ENCODE measurements at regions of chr6 and their contacts with region 1.

Region 1: DNA sequence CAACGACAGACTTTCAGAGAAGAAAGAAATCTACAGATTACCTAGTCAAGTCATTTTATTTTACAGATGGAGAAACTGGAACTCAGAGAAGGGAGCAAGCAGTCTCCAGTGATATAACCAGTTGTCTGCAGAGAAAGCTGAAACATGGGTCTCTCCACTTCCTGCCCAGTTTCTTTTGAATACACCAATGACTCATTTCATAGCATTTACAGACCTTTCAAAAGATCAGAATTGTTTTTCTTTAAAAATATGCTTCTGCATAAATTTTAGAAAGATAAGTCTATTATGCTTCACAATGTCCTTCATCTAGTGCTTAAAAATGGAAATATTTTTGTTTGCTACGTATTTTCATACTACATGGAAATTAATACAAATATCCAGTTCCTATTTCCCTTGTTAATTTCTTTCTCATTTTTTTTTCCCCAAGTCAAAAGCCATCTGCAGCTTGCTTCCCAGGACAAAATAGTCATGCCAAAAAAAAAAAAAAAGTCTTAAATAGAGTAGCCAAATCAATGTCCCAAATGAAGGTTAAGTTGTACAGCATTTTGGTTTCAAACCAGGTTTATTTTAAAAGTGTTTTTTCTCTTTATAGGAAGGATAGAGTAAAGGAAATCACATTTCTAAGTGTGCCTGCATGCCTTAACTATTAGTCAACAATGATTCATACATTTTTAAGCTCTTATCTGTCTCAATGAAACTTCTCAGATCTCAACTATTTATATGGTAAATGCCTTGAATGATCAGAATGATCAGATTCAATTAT is 36.9 kb downstream of the ARHGAP18 start:
- DNase-seq: no peak
- H3K4me3 Mint-ChIP-seq: peak overlapping the region; percentile 61
- H3K27ac Mint-ChIP-seq: peak overlapping the region; percentile 90
- H3K4me1 Mint-ChIP-seq: peaks cover 52% of the 10 kb centered on the region
- H3K27me3 Mint-ChIP-seq: no peaks in the 10 kb centered on the region

Region 2: GRCh38 chr6:128903715-128904114 is 769.3 kb before region 1 on chr6:
- intact Hi-C with region 1: no loop called
- DNase-seq: no peak
- H3K4me3 Mint-ChIP-seq: no peak overlapping the region
- H3K27ac Mint-ChIP-seq: no peak overlapping the region
- H3K4me1 Mint-ChIP-seq: no peaks in the 10 kb centered on the region
- H3K27me3 Mint-ChIP-seq: no peaks in the 10 kb centered on the region

Region 3: GRCh38 chr6:129490521-129491245 is 182.4 kb before region 1 on chr6:
- intact Hi-C with region 1: loop called (anchors 1 kb)
- DNase-seq: peak; percentile 61
- H3K4me3 Mint-ChIP-seq: peak overlapping the region; percentile 73
- H3K27ac Mint-ChIP-seq: peak overlapping the region; percentile 95
- H3K4me1 Mint-ChIP-seq: peaks cover 67% of the 10 kb centered on the region
- H3K27me3 Mint-ChIP-seq: no peaks in the 10 kb centered on the region

Region 4: DNA sequence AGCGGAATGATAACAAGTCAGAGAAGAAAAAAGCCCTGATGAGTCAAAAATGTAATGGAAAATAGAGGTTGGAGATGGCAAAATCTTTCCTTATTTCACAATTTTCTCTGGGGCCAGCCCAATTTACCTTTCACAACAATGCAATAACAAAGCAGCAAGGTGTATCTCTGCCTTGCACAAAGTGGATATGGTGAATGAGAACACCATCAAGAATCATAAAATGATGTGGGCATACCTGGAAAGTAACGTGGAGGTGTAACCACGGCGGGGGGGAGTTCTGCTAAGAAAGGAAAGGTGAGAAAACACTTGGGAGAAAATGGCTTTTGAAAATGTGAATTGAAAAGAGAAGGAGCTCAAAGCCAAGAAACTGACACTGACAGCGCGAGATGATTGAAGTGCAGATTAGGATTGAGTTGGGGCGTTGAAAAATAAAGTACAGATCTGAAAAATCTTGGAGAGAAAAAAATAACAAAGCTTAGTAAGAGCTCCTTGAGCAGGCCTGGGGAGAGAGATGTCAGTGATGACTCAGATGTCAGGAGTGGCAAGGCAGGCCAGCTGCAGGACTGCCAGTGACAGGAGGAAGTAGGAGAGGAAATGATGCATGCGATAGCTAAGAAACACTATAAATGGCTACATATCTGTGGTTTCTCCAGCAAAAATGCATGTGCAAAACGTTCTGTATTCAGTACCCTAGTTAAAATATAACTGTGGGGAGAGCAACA is 10.7 kb after region 1 on chr6:
- intact Hi-C with region 1: loop called (anchors 1 kb)
- DNase-seq: peak; percentile 64
- H3K4me3 Mint-ChIP-seq: peak overlapping the region; percentile 30
- H3K27ac Mint-ChIP-seq: peak overlapping the region; percentile 83
- H3K4me1 Mint-ChIP-seq: peaks cover 62% of the 10 kb centered on the region
- H3K27me3 Mint-ChIP-seq: no peaks in the 10 kb centered on the region

Region 5: DNA sequence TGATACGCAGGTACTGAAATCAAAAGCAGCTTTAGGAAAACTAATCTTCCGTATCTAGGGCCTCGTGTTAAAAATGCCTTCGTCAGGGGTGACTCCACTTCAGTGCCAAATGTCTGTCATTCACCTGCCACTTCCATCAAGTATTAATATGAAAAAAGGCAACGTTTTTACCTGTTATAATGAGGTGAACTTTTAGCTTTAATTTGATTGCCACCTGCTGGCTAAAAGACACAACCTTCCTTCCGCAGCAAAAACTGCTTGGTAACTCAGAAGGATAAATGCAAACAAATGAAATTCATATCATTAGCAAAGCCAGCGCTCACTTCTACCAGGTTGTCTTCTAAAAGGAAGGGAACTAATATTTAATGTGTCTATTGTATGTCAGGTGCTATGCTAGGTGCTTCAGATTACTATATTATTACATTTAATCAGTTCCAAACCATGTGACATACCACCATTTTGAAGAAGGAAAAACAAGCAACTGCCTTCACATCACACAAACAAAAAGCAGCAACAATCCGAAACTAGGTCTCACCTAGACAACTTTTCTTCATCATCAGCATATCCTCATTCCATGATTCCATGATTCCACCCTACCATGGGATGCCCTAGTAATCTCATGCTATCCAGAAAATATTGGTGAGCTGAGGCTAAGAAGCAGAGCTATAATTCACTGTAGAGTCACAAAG is 57.6 kb after region 1 on chr6:
- intact Hi-C with region 1: loop called (anchors 1 kb)
- DNase-seq: no peak
- H3K4me3 Mint-ChIP-seq: no peak overlapping the region
- H3K27ac Mint-ChIP-seq: peak overlapping the region; percentile 8
- H3K4me1 Mint-ChIP-seq: peaks cover 19% of the 10 kb centered on the region
- H3K27me3 Mint-ChIP-seq: no peaks in the 10 kb centered on the region

Region 6: DNA sequence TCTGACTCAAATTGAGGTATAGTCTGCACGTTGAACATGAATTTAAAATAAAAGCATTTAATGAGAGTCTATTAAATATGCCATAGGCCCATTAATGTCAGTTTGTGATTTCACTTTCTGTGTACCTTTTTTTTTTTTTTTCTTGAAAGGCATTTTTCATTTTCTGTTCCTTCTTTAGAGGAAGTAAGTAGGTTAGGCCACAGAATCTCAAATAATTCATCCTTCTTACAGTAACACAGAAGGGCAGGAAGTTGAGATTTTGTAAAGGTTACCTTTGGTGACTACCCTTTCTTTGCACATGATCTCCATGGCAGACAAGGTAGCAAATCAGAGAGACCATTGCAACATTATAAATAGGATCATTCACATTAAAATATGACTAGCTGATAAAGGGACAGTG is 354.9 kb after region 1 on chr6:
- intact Hi-C with region 1: loop called (anchors 2 kb)
- DNase-seq: no peak
- H3K4me3 Mint-ChIP-seq: no peak overlapping the region
- H3K27ac Mint-ChIP-seq: peak overlapping the region; percentile 67
- H3K4me1 Mint-ChIP-seq: peaks cover 36% of the 10 kb centered on the region
- H3K27me3 Mint-ChIP-seq: peaks cover 3% of the 10 kb centered on the region

Region 7: DNA sequence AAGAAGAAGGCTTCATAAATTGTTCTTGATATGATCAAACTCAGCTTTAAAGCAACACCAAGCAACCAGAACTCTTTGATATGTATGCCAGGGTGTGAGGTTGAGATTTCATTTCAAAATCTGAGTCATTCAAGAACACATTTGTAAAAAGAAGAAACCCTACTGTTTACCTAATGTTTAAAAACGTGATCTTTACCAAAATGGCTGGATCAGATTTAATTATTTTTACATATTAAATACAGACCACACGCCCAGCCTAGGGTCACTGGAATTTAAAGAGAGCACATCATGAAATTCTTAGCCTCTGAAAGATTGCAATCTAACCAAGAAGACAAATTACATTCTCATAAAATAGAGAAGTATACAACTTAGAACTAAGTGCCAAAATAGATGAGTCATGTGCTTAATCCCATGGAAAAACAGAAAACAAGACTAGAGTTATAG is 947.3 kb after region 1 on chr6:
- intact Hi-C with region 1: loop called (anchors 5 kb)
- DNase-seq: no peak
- H3K4me3 Mint-ChIP-seq: no peak overlapping the region
- H3K27ac Mint-ChIP-seq: no peak overlapping the region
- H3K4me1 Mint-ChIP-seq: peaks cover 51% of the 10 kb centered on the region
- H3K27me3 Mint-ChIP-seq: no peaks in the 10 kb centered on the region